PC-9 (cell line): ENCODE measurements at regions of chr1 and their contacts with region 1.

Region 1: GRCh38 chr1:235011599-235012435 is 116.8 kb downstream of the TOMM20 start:
- DNase-seq: peak; percentile 89 to 98
- H3K4me3 ChIP-seq: peak overlapping the region; percentile 28; the same call in 1 of the 2 replicates
- H3K27ac ChIP-seq: peak overlapping the region; percentile 98
- H3K4me1 ChIP-seq: peaks cover 35% of the 10 kb centered on the region
- H3K27me3 ChIP-seq: no peaks in the 10 kb centered on the region
- CTCF ChIP-seq: no peak

Region 2: DNA sequence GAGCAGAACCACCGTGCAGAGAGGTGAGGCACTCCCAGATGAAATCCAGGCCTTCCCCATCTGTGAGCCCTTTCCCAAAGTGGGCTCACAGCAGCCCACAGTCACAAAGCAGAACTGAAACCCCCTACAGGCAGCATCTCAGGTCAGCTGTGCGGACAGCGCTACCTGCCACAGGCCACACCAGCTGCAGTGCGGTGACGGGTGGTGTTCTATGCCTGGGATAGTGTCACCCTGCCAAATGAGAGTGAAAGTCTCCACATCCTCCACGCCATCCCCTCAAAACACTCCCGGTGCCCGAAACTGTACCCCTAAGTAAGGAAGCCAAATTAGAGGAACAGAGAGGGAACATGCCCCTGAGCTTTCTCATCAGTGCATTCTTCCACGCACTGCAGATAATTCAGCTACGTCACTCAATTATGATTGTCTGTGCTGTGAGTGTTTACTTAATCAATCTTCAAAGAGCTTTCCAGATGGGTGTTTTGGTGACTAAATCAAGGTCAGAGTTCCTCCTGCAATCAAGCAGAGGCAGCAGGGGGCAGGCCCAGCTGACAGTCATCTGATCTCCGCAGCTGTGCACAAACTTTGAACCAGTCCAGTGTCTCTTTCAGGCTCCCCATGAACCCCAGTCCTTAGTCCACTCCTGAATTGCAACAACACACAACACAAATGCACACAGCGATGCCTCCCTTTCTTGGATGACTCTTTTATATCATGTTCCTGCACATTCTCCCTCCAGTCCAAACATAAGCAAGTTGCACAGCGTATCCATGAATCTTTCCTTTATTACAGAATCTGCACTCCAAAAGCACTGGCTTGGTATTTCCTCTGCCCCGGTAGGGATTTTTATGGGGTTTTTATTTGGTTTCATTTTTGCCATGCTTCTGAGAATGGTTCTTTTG is 33.2 kb before region 1 on chr1:
- CTCF ChIA-PET with region 1: interaction called, 3 read pairs
- POLR2A ChIA-PET with region 1: interaction called, 4 read pairs
- intact Hi-C with region 1: loop called (anchors 1 kb)
- DNase-seq: peak; percentile 45 to 93
- H3K4me3 ChIP-seq: peak overlapping the region; percentile 30; the same call in 1 of the 2 replicates
- H3K27ac ChIP-seq: peak overlapping the region; percentile 99
- H3K4me1 ChIP-seq: peaks cover 99% of the 10 kb centered on the region
- H3K27me3 ChIP-seq: no peaks in the 10 kb centered on the region
- CTCF ChIP-seq: no peak

Region 3: GRCh38 chr1:234987415-234988154 is 24.2 kb before region 1 on chr1:
- CTCF ChIA-PET with region 1: no interaction called
- POLR2A ChIA-PET with region 1: no interaction called
- intact Hi-C with region 1: loop called (anchors 1 kb)
- DNase-seq: peak; percentile 88
- H3K4me3 ChIP-seq: no peak overlapping the region
- H3K27ac ChIP-seq: peak overlapping the region; percentile 96
- H3K4me1 ChIP-seq: peaks cover 66% of the 10 kb centered on the region
- H3K27me3 ChIP-seq: no peaks in the 10 kb centered on the region
- CTCF ChIP-seq: no peak

Region 4: GRCh38 chr1:235045034-235045720 is 33.4 kb after region 1 on chr1:
- CTCF ChIA-PET with region 1: no interaction called
- POLR2A ChIA-PET with region 1: no interaction called
- intact Hi-C with region 1: no loop called
- DNase-seq: no peak
- H3K4me3 ChIP-seq: no peak overlapping the region
- H3K27ac ChIP-seq: no peak overlapping the region
- H3K4me1 ChIP-seq: peaks cover 10% of the 10 kb centered on the region; the same call in 1 of the 2 replicates
- H3K27me3 ChIP-seq: no peaks in the 10 kb centered on the region
- CTCF ChIP-seq: no peak

Region 5: DNA sequence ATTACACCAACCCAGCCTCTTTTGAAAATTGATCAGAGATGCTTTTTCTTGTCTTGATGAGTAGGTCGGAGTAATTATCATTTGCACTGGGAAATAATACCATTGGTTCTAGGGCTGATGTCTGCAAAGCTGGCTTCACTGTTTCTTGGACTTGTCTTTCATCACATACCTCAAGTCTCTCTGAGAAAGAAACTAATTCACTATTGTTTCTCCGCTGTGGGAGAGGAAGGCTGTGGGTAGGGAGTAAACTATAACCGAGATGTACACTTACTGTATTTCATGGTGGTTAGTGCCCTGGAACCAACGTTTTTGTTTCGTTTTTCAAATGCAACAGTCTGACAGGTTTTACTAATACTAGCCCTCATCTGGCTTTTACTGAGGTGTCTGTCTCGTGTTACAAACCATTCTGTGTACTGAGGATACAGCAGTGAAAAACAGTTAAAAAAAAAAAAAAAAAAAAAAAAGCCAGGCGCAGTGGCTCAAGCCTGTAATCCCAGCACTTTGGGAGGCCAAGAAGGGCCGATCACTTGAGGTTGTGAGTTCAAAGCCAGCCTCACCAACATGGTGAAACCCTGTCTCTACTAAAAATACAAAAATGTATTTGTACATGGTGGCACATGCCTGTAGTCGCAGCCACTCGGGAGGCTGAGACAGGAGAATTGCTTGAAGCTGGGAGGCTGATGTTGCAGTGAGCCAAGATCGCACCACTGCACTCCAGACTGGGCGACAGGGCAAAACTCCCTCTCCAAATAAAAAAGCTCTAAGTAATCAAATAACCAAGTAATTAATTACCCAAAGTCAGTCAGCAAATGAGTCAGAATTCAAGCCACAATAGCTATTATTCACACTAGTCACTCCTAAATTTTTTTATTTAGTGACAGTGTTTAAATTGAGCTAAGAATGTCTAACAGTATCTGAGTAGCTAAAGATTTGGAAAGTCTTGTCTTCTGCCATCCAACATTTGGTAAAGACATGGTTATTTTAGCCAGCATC is 93.5 kb after region 1 on chr1:
- CTCF ChIA-PET with region 1: no interaction called
- POLR2A ChIA-PET with region 1: no interaction called
- intact Hi-C with region 1: no loop called
- DNase-seq: no peak
- H3K4me3 ChIP-seq: no peak overlapping the region
- H3K27ac ChIP-seq: no peak overlapping the region
- H3K4me1 ChIP-seq: no peaks in the 10 kb centered on the region
- H3K27me3 ChIP-seq: no peaks in the 10 kb centered on the region
- CTCF ChIP-seq: no peak

Region 6: GRCh38 chr1:235628316-235629005 is 616.6 kb after region 1 on chr1:
- CTCF ChIA-PET with region 1: no interaction called
- POLR2A ChIA-PET with region 1: interaction called, 17 read pairs
- intact Hi-C with region 1: no loop called
- DNase-seq: no peak
- H3K4me3 ChIP-seq: no peak overlapping the region
- H3K27ac ChIP-seq: no peak overlapping the region
- H3K4me1 ChIP-seq: peaks cover 2% of the 10 kb centered on the region; the same call in 1 of the 2 replicates
- H3K27me3 ChIP-seq: no peaks in the 10 kb centered on the region
- CTCF ChIP-seq: no peak